Mucosa of descending colon (tissue), 3 donors: ENCODE measurements at regions of chr2 and their contacts with region 1.

Region 1: GRCh38 chr2:177212106-177212890 is at the start of gene HNRNPA3:
- DNase-seq: peak; percentile 98 to 100 (median 100)
- ATAC-seq: peak; percentile 96
- H3K4me3 ChIP-seq: peak within 1 kb of the TSS; percentile 69
- H3K4me1 ChIP-seq: peaks cover 36% of the 10 kb centered on the region
- CTCF ChIP-seq: no peak
- total RNA-seq, gene HNRNPA3: 133 to 169 (median 151) TPM

Region 2: DNA sequence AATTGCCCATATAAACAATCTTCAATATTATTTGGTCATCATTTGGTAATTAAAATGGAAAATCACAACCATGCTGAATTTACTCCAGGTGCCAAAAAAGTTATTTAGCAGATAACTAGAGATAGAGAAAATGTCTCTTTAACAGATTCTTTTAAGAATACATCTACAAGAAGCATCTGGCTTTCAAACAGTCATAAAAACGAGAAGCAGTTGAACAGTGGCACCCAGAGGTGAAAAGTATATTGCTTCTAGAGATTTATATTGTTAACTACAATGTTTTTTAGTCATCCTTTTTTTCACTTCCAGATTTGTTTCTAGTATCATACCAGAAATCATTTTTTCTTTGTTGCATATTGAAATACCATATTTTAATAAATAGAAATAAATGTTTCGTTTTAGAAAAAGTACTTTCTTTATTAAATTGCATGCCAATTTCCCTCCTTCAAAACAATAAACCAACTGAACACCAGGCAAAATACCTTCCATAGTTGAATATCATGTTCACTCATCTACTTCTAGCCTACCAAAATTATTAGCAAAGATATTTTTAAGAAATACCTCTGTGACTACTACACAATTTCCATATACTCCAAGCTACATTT is 65.1 kb before region 1 on chr2:
- intact Hi-C with region 1: no loop called
- DNase-seq: peak in 1 of 3 donors; percentile 54
- ATAC-seq: peak; percentile 60
- H3K4me3 ChIP-seq: no peak overlapping the region
- H3K4me1 ChIP-seq: no peaks in the 10 kb centered on the region
- CTCF ChIP-seq: no peak

Region 3: DNA sequence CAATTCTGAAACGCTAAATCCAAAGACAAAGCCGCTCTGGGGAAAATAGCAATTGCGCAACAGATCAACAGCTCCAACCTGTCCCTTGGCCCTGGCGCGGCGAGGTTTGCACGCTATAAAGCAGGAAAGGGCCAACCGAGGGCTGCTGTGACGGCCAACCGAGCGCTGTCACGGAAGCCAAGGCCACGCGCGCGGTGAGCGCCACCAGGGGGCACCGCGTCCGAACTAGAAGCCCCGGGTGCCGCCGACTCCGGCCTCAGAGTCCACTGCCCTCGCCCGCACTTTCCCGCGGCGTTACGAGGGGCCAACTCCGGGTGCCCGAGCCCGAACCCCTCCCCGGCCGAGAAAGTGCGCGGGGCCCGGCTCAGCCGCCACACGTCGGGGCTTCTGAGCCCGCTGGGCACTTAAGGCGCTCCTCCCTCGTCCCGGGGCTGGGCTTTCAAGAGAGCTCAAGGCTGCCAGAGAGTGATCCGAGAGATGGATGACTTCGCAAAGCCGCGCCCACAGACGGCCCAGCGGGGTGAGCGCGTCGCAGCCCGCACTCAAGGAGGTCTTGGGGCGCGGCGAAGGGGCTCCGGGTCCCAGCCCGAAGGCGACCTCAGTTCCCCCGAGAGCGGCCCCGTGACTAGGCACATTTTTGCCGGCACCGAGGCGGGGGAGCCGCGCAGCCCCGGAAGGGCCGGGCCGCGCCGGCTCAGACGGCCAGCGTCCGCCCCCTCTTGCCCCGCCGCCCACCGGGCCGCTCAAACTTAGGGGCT is 51.3 kb after region 1 on chr2:
- intact Hi-C with region 1: loop called in 1 of 2 experiments (anchors 10 kb)
- DNase-seq: peak; percentile 98 to 100 (median 100)
- ATAC-seq: peak; percentile 83
- H3K4me3 ChIP-seq: peak overlapping the region; percentile 100
- H3K4me1 ChIP-seq: peaks cover 34% of the 10 kb centered on the region
- CTCF ChIP-seq: peak; percentile 80